Heart left ventricle (tissue), 16 donors: ENCODE measurements at regions of chr20 and their contacts with region 1.

Region 1: GRCh38 chr20:56712141-56712540 is 83.0 kb downstream of the TFAP2C start:
- DNase-seq: no peak
- ATAC-seq: no peak
- H3K4me3 ChIP-seq: no peak overlapping the region
- H3K27ac ChIP-seq: no peak overlapping the region
- H3K4me1 ChIP-seq: no peaks in the 10 kb centered on the region
- H3K27me3 ChIP-seq: peaks cover 0 to 17% (median 0%) of the 10 kb centered on the region in 9 donors
- CTCF ChIP-seq: no peak
- POLR2A ChIP-seq: no peak

Region 2: GRCh38 chr20:56796359-56796758 is 84.2 kb after region 1 on chr20:
- intact Hi-C with region 1: loop called in 1 of 10 experiments (anchors 10 kb)
- DNase-seq: no peak
- ATAC-seq: no peak
- H3K4me3 ChIP-seq: no peak overlapping the region
- H3K27ac ChIP-seq: no peak overlapping the region
- H3K4me1 ChIP-seq: no peaks in the 10 kb centered on the region
- H3K27me3 ChIP-seq: peaks cover 0 to 12% (median 3%) of the 10 kb centered on the region in 9 donors
- CTCF ChIP-seq: no peak
- POLR2A ChIP-seq: no peak